ENCODE measurements at regions of chr7 and their contacts with region 1.

Region 1: GRCh38 chr7:106112117-106112971 is at the start of gene SYPL1:
- DNase-seq: peak; percentile 94
- ATAC-seq: peak; percentile 76
- H3K4me3 Mint-ChIP-seq: peak within 1 kb of the TSS; percentile 94
- H3K27ac Mint-ChIP-seq: peak within 1 kb of the TSS; percentile 97
- H3K4me1 Mint-ChIP-seq: peaks cover 80% of the 10 kb centered on the region
- H3K27me3 Mint-ChIP-seq: no peaks in the 10 kb centered on the region
- CTCF ChIP-seq: no peak
- total RNA-seq, gene SYPL1: 109 and 116 TPM in 2 replicates

Region 2: GRCh38 chr7:105808703-105809590 is 303.4 kb before region 1 on chr7:
- CTCF ChIA-PET with region 1: no interaction called
- POLR2A ChIA-PET with region 1: no interaction called
- intact Hi-C with region 1: loop called (anchors 5 kb)
- DNase-seq: peak; percentile 60
- ATAC-seq: peak; percentile 95
- H3K4me3 Mint-ChIP-seq: peak overlapping the region; percentile 66
- H3K27ac Mint-ChIP-seq: peak overlapping the region; percentile 87
- H3K4me1 Mint-ChIP-seq: peaks cover 46% of the 10 kb centered on the region
- H3K27me3 Mint-ChIP-seq: no peaks in the 10 kb centered on the region
- CTCF ChIP-seq: no peak

Region 3: GRCh38 chr7:106080300-106080987 is 31.9 kb before region 1 on chr7:
- CTCF ChIA-PET with region 1: no interaction called
- POLR2A ChIA-PET with region 1: interaction called, 250 read pairs
- intact Hi-C with region 1: no loop called
- DNase-seq: no peak
- ATAC-seq: no peak
- H3K4me3 Mint-ChIP-seq: no peak overlapping the region
- H3K27ac Mint-ChIP-seq: peak overlapping the region; percentile 69
- H3K4me1 Mint-ChIP-seq: peaks cover 89% of the 10 kb centered on the region
- H3K27me3 Mint-ChIP-seq: no peaks in the 10 kb centered on the region
- CTCF ChIP-seq: no peak

Region 4: DNA sequence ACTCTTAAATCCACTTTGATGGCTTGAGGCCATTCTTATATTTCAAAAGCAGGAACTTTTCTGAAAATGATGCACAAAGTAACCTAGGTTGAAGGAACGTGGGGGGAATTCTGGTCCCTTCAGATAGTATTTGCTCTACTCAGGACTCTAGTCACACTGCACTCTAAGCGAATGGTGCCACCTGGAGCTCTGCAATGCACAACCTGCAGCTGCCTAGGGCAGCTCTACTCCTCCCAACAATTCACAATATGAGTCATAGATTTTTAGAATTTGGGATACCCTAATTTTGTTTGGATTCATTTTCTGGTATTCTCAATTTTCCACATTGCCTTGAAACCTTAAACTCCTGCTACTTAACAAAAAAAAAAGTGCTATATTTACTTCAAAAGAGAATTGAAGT is 17.5 kb before region 1 on chr7:
- CTCF ChIA-PET with region 1: interaction called, 4 read pairs
- POLR2A ChIA-PET with region 1: interaction called, 57 read pairs
- intact Hi-C with region 1: loop called (anchors 1 kb)
- DNase-seq: no peak
- ATAC-seq: peak; percentile 64
- H3K4me3 Mint-ChIP-seq: no peak overlapping the region
- H3K27ac Mint-ChIP-seq: peak overlapping the region; percentile 72
- H3K4me1 Mint-ChIP-seq: peaks cover 75% of the 10 kb centered on the region
- H3K27me3 Mint-ChIP-seq: no peaks in the 10 kb centered on the region
- CTCF ChIP-seq: no peak

Region 5: GRCh38 chr7:106126170-106126938 is 14.0 kb after region 1 on chr7:
- CTCF ChIA-PET with region 1: interaction called, 5 read pairs
- POLR2A ChIA-PET with region 1: interaction called, 34 read pairs
- intact Hi-C with region 1: loop called (anchors 1 kb)
- DNase-seq: no peak
- ATAC-seq: peak; percentile 50
- H3K4me3 Mint-ChIP-seq: no peak overlapping the region
- H3K27ac Mint-ChIP-seq: no peak overlapping the region
- H3K4me1 Mint-ChIP-seq: peaks cover 13% of the 10 kb centered on the region
- H3K27me3 Mint-ChIP-seq: no peaks in the 10 kb centered on the region
- CTCF ChIP-seq: no peak

Region 6: DNA sequence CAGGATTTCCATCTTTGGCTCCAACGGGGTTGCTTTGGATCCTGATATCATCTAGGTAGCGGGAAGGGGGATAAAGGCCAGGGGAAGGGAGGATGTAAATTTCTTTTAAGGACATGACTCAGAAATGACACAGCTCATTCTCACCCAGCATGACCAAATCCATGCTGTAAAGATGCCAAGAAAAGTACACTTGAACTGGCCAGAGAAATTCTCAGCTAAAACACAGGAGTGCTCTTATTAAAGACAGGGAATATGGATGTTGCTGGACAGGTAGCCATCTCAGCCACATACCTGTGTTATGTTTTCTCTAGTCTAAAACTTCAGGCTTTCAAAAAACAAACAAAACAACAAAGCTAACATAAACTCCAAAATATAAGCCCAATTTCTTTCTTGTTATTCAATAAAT is 104.2 kb after region 1 on chr7:
- CTCF ChIA-PET with region 1: no interaction called
- POLR2A ChIA-PET with region 1: no interaction called
- intact Hi-C with region 1: no loop called
- DNase-seq: no peak
- ATAC-seq: no peak
- H3K4me3 Mint-ChIP-seq: no peak overlapping the region
- H3K27ac Mint-ChIP-seq: no peak overlapping the region
- H3K4me1 Mint-ChIP-seq: no peaks in the 10 kb centered on the region
- H3K27me3 Mint-ChIP-seq: peaks cover 11% of the 10 kb centered on the region
- CTCF ChIP-seq: no peak

Region 7: DNA sequence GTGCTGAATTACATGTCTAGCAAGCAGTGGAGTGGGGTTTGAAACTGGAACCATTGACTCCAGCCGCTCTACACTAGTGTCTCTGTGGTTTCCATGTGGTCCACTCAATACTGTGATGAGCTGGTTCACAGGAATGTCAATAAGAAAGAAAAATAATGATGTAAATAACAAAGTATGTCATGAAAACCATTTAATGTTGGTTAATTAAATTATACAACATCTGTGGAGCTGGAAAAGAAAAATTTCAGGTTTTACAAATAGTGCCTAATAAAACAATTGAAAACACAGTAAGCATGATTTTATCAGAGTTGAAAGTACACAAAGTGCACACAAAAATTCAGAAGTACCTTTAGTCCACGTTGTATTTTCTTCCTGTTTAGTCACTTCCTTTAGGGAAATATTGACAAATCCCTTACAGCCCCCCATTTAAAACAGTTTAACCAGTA is 201.1 kb after region 1 on chr7:
- CTCF ChIA-PET with region 1: no interaction called
- POLR2A ChIA-PET with region 1: no interaction called
- intact Hi-C with region 1: no loop called
- DNase-seq: no peak
- ATAC-seq: no peak
- H3K4me3 Mint-ChIP-seq: peak overlapping the region; percentile 1
- H3K27ac Mint-ChIP-seq: peak overlapping the region; percentile 26
- H3K4me1 Mint-ChIP-seq: peaks cover 17% of the 10 kb centered on the region
- H3K27me3 Mint-ChIP-seq: no peaks in the 10 kb centered on the region
- CTCF ChIP-seq: no peak

Region 8: GRCh38 chr7:106405697-106406141 is 293.4 kb after region 1 on chr7:
- CTCF ChIA-PET with region 1: no interaction called
- POLR2A ChIA-PET with region 1: no interaction called
- intact Hi-C with region 1: no loop called
- DNase-seq: no peak
- ATAC-seq: no peak
- H3K4me3 Mint-ChIP-seq: no peak overlapping the region
- H3K27ac Mint-ChIP-seq: no peak overlapping the region
- H3K4me1 Mint-ChIP-seq: no peaks in the 10 kb centered on the region
- H3K27me3 Mint-ChIP-seq: peaks cover 11% of the 10 kb centered on the region
- CTCF ChIP-seq: no peak